Activated naive CD4-positive, alpha-beta T cell treated with anti-CD3 and anti-CD28 coated beads for 36 hours (primary cell): ENCODE measurements at regions of chr20 and their contacts with region 1.

Region 1: GRCh38 chr20:10316582-10316981 is 98.0 kb downstream of the SNAP25 start:
- DNase-seq: peak; percentile 41
- H3K4me3 Mint-ChIP-seq: no peak overlapping the region
- H3K27ac Mint-ChIP-seq: no peak overlapping the region
- H3K4me1 Mint-ChIP-seq: no peaks in the 10 kb centered on the region
- H3K27me3 Mint-ChIP-seq: peaks cover 25% of the 10 kb centered on the region

Region 2: DNA sequence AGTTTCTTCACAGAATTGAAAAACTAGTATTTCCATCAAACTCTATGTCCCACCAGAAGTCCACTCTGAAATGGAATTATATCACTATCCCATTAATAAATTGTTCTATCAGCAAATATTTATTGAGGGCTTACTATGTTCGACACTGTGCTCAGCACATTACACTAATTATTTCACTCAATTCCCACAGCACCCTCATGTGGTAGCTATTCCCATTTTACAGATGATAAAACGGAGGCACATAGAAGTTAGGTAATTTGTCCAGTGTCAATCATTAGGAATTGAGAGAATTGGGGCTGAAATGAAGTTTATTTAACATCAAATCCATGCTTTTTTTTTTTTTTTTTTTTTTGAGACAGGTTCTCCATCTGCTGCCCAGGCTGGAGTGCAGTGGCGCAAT is 64.9 kb after region 1 on chr20:
- CTCF ChIA-PET with region 1: interaction called, 4 read pairs
- intact Hi-C with region 1: loop called (anchors 2 kb)
- DNase-seq: no peak
- H3K4me3 Mint-ChIP-seq: no peak overlapping the region
- H3K27ac Mint-ChIP-seq: no peak overlapping the region
- H3K4me1 Mint-ChIP-seq: no peaks in the 10 kb centered on the region
- H3K27me3 Mint-ChIP-seq: peaks cover 11% of the 10 kb centered on the region